ENCODE measurements at regions of chr2 and their contacts with region 1.

Region 1: GRCh38 chr2:10434886-10435819 is 13.0 kb downstream of the ODC1 start:
- DNase-seq: peak; percentile 70 to 89 (median 74)
- ATAC-seq: peak; percentile 51 to 87 (median 80)
- H3K4me3 ChIP-seq: no peak overlapping the region
- H3K27ac ChIP-seq: no peak overlapping the region
- H3K4me1 ChIP-seq: peaks cover 0 to 20% (median 1%) of the 10 kb centered on the region in 12 donors
- H3K27me3 ChIP-seq: peaks cover 0 to 7% (median 0%) of the 10 kb centered on the region in 9 donors
- CTCF ChIP-seq: peak; percentile 92 to 99 (median 98)
- POLR2A ChIP-seq: no peak

Region 2: DNA sequence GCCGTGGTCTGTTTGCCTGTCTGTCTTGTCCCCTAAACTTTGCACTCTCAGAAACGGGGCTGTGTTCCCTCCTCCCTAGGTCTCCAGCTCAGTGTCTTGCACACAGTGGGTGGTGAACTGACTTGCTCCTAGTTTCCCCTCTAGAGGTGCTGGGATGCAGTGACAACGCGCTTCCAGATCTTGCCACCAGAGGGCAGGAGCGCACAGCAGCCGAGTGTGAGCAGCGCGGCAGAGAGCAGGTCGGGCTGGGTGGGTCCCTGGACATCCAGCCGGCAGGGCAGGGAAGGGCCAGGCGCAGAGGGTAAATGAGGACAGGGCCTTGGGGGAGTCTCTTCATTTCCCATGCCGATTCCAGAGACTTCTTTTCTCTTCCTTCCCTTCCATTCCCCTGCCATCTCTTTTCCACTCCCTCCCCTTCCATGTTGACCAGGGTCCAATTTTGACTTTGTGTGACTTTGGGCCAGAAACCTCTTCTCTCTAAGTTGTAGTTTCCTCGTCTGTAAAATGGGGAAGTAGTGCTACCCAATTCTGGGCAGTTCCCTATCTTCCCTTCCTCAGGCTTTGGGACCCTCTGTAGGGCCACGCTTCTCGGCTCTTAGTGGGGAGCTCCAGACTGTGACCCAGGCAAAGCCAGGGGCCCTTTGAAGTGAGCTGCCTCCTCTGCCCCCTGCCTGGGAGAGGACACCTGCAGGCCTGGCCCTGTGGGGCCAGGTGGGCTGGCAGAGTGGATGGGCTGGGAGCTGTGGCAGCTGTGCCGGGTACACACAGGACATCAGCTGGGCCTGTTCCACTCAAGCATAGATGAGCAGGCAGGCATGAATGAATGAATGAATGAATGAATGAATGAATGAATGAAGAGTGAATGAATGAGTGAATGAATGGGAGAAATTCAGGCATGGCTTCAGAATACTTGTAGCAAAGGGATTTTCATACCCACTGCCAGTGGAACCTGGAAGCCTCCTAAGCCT is 635.2 kb before region 1 on chr2:
- intact Hi-C with region 1: loop called in 1 of 10 experiments (anchors 10 kb)
- DNase-seq: peak; percentile 84 to 94 (median 88)
- ATAC-seq: peak; percentile 78 to 89 (median 80)
- H3K4me3 ChIP-seq: peak overlapping the region in 1 of 12 donors; percentile 12
- H3K27ac ChIP-seq: peak overlapping the region in 7 of 12 donors; percentile 18 to 67 (median 33)
- H3K4me1 ChIP-seq: peaks cover 0 to 52% (median 24%) of the 10 kb centered on the region in 12 donors
- H3K27me3 ChIP-seq: no peaks in the 10 kb centered on the region
- CTCF ChIP-seq: peak; percentile 92 to 99 (median 98)
- POLR2A ChIP-seq: no peak

Region 3: DNA sequence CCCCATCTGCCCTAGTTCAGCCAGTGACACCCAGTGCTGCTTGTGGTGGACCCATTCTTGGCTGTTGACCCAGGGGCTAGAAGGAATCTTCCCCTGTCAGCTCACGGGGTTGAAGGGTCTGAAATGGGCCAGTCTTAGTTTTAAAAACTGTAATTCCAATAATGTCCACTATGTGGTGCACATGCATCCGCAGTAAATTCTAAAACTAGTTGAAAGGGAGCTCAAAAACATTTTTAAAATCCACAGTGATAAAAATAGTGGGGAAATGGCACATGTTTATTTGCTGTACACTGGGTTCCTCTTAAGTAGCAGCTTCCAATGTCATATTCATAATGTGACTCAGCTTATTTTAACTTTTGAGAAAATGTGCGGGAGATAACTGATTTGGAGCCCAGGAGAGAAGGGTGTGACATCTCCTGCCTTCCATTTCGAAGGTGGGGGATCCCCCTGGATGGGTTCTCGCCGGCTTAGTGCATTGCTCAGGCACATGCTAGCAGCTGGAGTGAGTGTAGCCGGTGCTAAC is 450.9 kb before region 1 on chr2:
- intact Hi-C with region 1: loop called in 1 of 10 experiments (anchors 10 kb)
- DNase-seq: no peak
- ATAC-seq: peak; percentile 47 to 65 (median 53)
- H3K4me3 ChIP-seq: no peak overlapping the region
- H3K27ac ChIP-seq: peak overlapping the region in 3 of 12 donors; percentile 37 to 74 (median 47)
- H3K4me1 ChIP-seq: peaks cover 0 to 38% (median 18%) of the 10 kb centered on the region in 12 donors
- H3K27me3 ChIP-seq: no peaks in the 10 kb centered on the region
- CTCF ChIP-seq: peak; percentile 72 to 96 (median 86)
- POLR2A ChIP-seq: no peak

Region 4: GRCh38 chr2:10122386-10123280 is 312.5 kb before region 1 on chr2 and contains the start of gene RRM2:
- intact Hi-C with region 1: loop called (anchors 1 to 2 kb)
- DNase-seq: peak; percentile 92 to 96 (median 94)
- ATAC-seq: peak; percentile 90 to 94 (median 93)
- H3K4me3 ChIP-seq: peak within 1 kb of the TSS; percentile 35 to 79 (median 54)
- H3K27ac ChIP-seq: no peak within 1 kb of the TSS
- H3K4me1 ChIP-seq: peaks cover 10 to 66% (median 21%) of the 10 kb centered on the region in 12 donors
- H3K27me3 ChIP-seq: peaks cover 8 to 24% (median 12%) of the 10 kb centered on the region in 9 donors
- CTCF ChIP-seq: peak in 2 of 12 donors; percentile 8 to 11
- POLR2A ChIP-seq: no peak
- total RNA-seq, gene RRM2: 0.09 to 32.6 (median 1.3) TPM in 8 of 9 donors, not detected in the other

Region 5: DNA sequence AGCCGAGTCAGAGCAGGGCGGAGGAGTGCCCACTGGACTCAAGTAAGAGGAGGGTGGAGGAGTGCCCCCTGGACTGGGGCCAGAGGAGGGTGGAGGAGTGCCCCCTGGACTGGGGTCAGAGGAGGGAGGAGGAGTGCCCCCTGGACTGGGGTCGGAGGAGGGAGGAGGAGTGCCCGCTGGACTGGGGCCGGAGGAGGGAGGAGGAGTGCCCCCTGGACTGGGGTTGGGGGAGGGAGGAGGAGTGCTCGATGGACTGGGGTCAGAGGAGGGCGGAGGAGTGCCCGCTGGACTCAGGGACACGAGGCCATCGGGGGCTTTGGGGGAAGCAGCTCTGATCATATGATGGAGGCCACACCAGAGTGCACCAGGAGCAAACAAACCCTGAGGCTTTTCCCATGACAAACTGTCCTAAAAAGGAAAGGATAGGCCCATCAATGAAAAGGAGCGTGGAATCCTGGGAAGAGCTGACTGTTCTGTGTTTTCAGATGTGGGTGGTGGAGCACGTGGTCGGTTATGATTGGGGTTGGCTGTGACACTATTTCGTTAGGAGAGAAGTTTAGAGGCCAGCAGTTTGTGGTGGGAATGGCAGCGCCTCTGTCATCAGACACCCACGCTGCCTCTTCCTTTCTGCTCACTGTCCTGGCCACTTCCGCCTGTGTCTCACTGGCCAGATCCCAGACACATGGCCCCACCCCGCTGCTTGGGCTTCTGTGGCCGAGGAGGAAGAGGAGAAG is 157.0 kb before region 1 on chr2:
- intact Hi-C with region 1: loop called in 1 of 10 experiments (anchors 10 kb)
- DNase-seq: peak in 4 of 5 donors; percentile 75 to 86 (median 80)
- ATAC-seq: peak; percentile 57 to 91 (median 87)
- H3K4me3 ChIP-seq: peak overlapping the region in 2 of 12 donors; percentile 13 to 25
- H3K27ac ChIP-seq: peak overlapping the region in 5 of 12 donors; percentile 11 to 89 (median 21)
- H3K4me1 ChIP-seq: peaks cover 0 to 33% (median 4%) of the 10 kb centered on the region in 12 donors
- H3K27me3 ChIP-seq: no peaks in the 10 kb centered on the region
- CTCF ChIP-seq: no peak
- POLR2A ChIP-seq: no peak

Region 6: GRCh38 chr2:10668402-10669012 is 233.4 kb after region 1 on chr2:
- intact Hi-C with region 1: loop called in 4 of 10 experiments (anchors 5 to 10 kb)
- DNase-seq: no peak
- ATAC-seq: no peak
- H3K4me3 ChIP-seq: no peak overlapping the region
- H3K27ac ChIP-seq: no peak overlapping the region
- H3K4me1 ChIP-seq: peaks cover 0 to 3% (median 0%) of the 10 kb centered on the region in 12 donors
- H3K27me3 ChIP-seq: no peaks in the 10 kb centered on the region
- CTCF ChIP-seq: peak; percentile 62 to 85 (median 70)
- POLR2A ChIP-seq: no peak